ENCODE measurements at regions of chr4 and their contacts with region 1.

Region 1: DNA sequence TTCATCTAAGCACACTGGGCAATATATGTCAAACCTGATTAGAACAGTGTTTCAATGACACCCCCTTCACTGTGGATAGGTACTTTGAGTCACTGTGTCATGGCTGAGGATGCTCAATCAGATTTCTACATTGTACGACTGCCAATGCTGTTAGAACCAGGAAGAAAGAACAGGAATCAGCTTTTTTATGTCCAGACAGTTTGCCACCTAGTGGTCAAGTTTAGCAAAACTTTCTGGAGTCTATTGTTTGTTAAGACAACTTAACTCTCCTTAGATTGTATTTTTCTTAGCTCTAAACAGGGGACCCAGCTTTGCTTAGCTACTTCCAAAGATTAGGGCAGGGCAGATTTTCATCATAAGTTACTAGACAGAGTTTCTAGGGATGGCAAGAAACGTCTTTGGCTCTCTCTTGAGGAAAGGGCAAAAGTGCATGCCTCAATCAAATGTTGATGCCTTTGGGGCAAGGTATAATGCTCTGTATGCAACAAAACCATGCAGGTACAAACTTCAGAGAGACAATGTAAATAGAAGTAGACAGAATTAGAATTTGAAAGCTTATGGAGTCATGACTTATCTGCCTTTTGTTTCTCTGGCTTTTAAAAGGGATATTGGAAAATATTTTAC is 40.5 kb upstream of the BMP3 start:
- DNase-seq: peak; percentile 87
- H3K4me3 ChIP-seq: peak overlapping the region; percentile 5
- H3K27ac ChIP-seq: peak overlapping the region; percentile 97
- H3K4me1 ChIP-seq: peaks cover 45% of the 10 kb centered on the region
- CTCF ChIP-seq: peak; percentile 93

Region 2: GRCh38 chr4:80492761-80493160 is 497.3 kb before region 1 on chr4:
- CTCF ChIA-PET with region 1: no interaction called
- POLR2A ChIA-PET with region 1: interaction called, 5 read pairs
- intact Hi-C with region 1: loop called (anchors 1 kb)
- DNase-seq: peak; percentile 27
- H3K4me3 ChIP-seq: no peak overlapping the region
- H3K27ac ChIP-seq: no peak overlapping the region
- H3K4me1 ChIP-seq: peaks cover 21% of the 10 kb centered on the region
- CTCF ChIP-seq: no peak

Region 3: DNA sequence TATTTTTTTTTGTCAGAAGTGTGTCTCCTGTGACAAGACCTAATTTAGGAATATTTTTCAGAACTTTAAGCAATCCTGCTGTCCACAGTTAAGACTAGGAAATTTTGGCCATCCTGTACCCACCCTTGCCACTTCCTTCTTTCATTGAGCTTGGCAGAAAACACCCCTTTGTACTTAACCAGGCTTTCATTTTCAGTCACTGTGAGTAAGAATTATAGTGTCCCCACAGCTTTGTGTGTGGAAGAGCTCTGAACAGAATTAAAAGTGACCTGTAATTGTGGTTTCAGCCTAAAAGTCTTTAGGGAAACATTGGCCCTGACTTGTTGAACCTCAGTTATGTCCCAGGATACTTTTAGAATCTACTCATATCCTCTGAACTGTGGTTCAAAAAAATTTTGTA is 113.2 kb before region 1 on chr4:
- CTCF ChIA-PET with region 1: interaction called, 3 read pairs
- POLR2A ChIA-PET with region 1: interaction called, 6 read pairs
- intact Hi-C with region 1: loop called (anchors 1 kb)
- DNase-seq: peak; percentile 67
- H3K4me3 ChIP-seq: peak overlapping the region; percentile 4
- H3K27ac ChIP-seq: peak overlapping the region; percentile 98
- H3K4me1 ChIP-seq: peaks cover 58% of the 10 kb centered on the region
- CTCF ChIP-seq: no peak

Region 4: GRCh38 chr4:80918004-80918403 is 72.0 kb before region 1 on chr4:
- CTCF ChIA-PET with region 1: no interaction called
- POLR2A ChIA-PET with region 1: no interaction called
- intact Hi-C with region 1: no loop called
- DNase-seq: no peak
- H3K4me3 ChIP-seq: no peak overlapping the region
- H3K27ac ChIP-seq: no peak overlapping the region
- H3K4me1 ChIP-seq: peaks cover 7% of the 10 kb centered on the region
- CTCF ChIP-seq: no peak

Region 5: DNA sequence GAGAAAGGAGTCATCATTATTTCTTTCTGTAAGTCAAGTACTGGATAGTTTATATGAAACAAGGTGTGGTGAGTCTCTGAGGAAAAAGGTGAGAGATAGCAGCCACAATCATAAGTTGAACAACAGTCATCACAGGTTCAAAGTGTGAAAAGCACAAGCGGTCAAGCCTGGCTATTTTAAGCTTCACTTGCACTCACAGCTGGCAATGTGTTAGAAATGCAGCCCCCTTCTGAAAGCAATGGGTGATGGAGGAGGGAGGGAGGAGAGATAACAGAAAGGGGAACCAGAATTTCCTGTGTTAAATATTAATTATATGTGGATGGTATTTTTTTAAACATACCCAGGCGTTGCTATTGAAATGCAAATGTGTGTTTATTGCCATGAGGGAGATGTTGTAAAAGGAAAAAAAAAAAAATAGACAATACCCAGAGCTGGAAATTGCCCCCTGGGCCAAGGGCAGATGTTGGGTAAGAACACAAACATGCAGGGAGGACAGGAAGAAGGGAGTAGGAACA is 13.6 kb after region 1 on chr4:
- CTCF ChIA-PET with region 1: interaction called, 6 read pairs
- POLR2A ChIA-PET with region 1: interaction called, 16 read pairs
- intact Hi-C with region 1: loop called (anchors 1 kb)
- DNase-seq: peak; percentile 95
- H3K4me3 ChIP-seq: peak overlapping the region; percentile 33
- H3K27ac ChIP-seq: peak overlapping the region; percentile 96
- H3K4me1 ChIP-seq: peaks cover 33% of the 10 kb centered on the region
- CTCF ChIP-seq: no peak

Region 6: DNA sequence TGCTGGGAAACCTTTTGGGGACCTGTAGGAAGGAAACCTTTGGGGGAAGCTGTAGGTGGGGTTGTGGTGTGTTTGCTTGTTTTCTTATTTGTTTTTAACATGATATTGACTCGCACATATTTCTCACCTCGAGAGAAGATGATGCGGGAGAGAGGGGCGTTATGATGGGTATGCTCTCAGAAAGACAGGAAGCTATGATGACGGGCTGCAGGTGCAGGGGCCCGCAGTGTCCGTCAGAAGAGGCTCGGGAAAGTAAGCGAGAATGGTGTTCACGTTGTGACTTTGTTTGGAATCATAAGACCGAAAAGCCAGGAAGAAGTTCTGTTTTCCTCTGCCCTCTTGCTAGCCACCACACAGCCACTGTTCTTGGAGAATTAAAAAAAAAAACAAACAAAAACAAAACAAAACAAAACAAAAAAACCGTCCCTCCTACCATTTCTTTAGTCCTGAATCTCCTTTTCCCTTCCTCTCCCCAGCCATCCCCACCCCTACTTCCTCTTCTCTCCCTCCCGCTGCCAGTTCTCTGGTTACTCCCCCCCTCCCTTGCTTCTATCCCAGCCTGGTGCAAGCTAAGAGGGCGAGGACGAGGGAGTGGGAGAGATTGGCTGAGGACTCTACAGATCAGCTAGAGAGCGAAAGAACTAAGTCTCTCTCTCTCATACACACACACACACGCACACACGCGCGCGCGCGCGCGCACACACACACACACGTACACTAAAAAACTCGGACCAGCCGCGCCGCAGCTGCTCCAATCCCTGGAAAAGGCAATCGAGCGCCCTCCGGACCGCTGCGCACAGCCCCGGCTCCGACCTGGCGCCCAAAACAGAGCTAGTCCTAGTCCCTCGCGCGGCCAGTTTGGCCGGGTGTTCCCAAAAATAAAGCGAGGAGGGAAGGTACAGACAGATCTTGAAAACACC is 40.3 kb after region 1 on chr4 and contains the start of gene BMP3:
- CTCF ChIA-PET with region 1: interaction called, 19 read pairs
- POLR2A ChIA-PET with region 1: interaction called, 98 read pairs
- intact Hi-C with region 1: loop called (anchors 1 kb)
- DNase-seq: peak; percentile 82
- H3K4me3 ChIP-seq: peak within 1 kb of the TSS; percentile 79
- H3K27ac ChIP-seq: peak within 1 kb of the TSS; percentile 92
- H3K4me1 ChIP-seq: peaks cover 55% of the 10 kb centered on the region
- CTCF ChIP-seq: no peak
- total RNA-seq, gene BMP3: 40.6 and 45.8 TPM in 2 replicates

Region 7: DNA sequence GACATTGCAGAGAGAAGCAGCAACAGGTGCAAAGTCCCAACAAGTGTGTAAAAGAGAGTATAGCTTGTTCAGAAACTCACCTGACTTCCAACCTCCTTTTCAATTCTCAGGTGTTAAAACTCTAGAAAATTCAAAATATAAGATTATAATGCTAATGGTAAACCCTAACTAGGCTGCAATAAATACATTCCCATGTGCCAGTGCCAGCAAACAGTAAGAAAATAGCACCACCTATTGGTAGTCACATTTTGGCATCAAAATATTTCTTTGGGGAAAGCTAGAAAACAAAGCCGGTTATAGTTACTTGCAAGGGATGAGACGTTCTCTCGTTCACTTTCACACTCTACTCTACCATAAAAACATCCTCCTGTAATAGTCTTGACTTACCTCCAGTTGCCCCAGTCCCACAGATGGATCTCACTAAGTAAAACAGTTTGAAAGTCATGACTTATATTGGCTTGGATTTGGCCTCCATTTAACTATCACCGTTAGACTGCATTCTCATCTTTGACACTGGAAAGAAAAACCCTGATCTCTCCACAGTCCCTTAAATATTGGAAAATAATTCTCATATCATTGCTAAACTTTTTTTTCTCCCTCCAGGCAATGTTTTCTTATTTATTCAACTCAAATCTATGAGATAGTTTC is 50.1 kb after region 1 on chr4:
- CTCF ChIA-PET with region 1: interaction called, 6 read pairs
- POLR2A ChIA-PET with region 1: interaction called, 98 read pairs
- intact Hi-C with region 1: loop called (anchors 1 kb)
- DNase-seq: peak; percentile 82
- H3K4me3 ChIP-seq: peak overlapping the region; percentile 52
- H3K27ac ChIP-seq: peak overlapping the region; percentile 92
- H3K4me1 ChIP-seq: peaks cover 72% of the 10 kb centered on the region
- CTCF ChIP-seq: peak; percentile 96

Measured in OCI-LY7 (cell line).